ENCODE measurements at regions of chr9 and their contacts with region 1.

Region 1: GRCh38 chr9:489198-490197 is 274.8 kb downstream of the DOCK8 start:
- DNase-seq: no peak
- ATAC-seq: no peak
- H3K4me3 ChIP-seq: no peak overlapping the region
- H3K27ac ChIP-seq: no peak overlapping the region
- H3K4me1 ChIP-seq: no peaks in the 10 kb centered on the region
- H3K27me3 ChIP-seq: no peaks in the 10 kb centered on the region
- CTCF ChIP-seq: no peak
- POLR2A ChIP-seq: no peak

Region 2: DNA sequence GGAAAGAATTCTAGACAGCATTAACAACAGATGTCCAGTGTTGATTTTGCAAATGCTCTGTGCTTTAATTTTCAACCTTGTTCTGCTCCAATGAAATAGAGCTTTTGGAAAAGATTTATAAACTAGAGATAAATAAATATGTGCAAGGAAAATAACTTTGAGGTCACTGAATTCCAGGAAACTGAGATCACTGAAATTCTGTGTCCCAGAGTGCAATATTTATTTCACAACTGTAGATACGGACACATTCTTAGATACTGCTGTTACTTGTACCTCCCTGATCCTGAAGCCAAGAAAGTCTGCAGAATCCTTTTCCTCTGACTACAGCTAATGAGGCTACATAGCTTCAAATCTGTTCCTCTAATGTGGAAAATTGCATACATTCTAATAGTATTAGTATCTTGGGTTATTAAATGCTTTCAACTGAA is 51.9 kb before region 1 on chr9:
- intact Hi-C with region 1: loop called in 1 of 10 experiments (anchors 10 kb)
- DNase-seq: no peak
- ATAC-seq: peak; percentile 63 to 87 (median 80)
- H3K4me3 ChIP-seq: no peak overlapping the region
- H3K27ac ChIP-seq: peak overlapping the region in 10 of 12 donors; percentile 27 to 70 (median 56)
- H3K4me1 ChIP-seq: peaks cover 0 to 20% (median 4%) of the 10 kb centered on the region in 12 donors
- H3K27me3 ChIP-seq: no peaks in the 10 kb centered on the region
- CTCF ChIP-seq: no peak
- POLR2A ChIP-seq: no peak